IMR-90 (cell line): ENCODE measurements at regions of chr17 and their contacts with region 1.

Region 1: DNA sequence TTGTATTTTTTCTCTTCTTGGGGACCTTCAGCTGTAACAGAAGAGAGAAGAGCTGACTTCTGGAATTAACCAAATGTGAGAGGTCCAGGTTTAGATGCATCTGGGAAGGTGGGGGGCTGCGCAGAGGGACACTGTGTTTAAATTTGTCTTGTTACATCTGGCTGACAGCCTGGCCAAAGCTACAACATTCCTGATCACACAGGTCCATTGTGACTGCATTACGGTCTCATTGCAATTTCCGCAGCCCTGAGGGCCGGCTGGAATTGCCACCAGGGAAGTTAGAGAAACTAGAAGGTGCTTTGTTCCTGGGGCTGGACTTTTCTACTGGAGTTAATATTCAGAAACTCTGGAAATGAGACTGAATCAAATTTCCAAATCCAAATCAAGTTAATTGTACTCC is 37.9 kb upstream of the LRRC75A start:
- DNase-seq: no peak
- ATAC-seq: no peak
- H3K4me3 ChIP-seq: no peak overlapping the region
- H3K27ac ChIP-seq: no peak overlapping the region
- H3K4me1 ChIP-seq: no peaks in the 10 kb centered on the region
- H3K27me3 ChIP-seq: peaks cover 24% of the 10 kb centered on the region
- CTCF ChIP-seq: no peak
- POLR2A ChIP-seq: no peak
- RAD21 ChIP-seq: no peak

Region 2: GRCh38 chr17:16383772-16384287 is 146.1 kb before region 1 on chr17:
- CTCF ChIA-PET with region 1: no interaction called
- POLR2A ChIA-PET with region 1: no interaction called
- dilution Hi-C with region 1: no loop called
- in situ Hi-C with region 1: no loop called
- intact Hi-C with region 1: no loop called
- DNase-seq: no peak
- ATAC-seq: no peak
- H3K4me3 ChIP-seq: no peak overlapping the region
- H3K27ac ChIP-seq: no peak overlapping the region
- H3K4me1 ChIP-seq: peaks cover 4% of the 10 kb centered on the region; the same call in 1 of the 2 replicates
- H3K27me3 ChIP-seq: no peaks in the 10 kb centered on the region
- CTCF ChIP-seq: no peak
- POLR2A ChIP-seq: 0 out of 2 replicates have a peak, but pooled peaks have one; percentile 3
- RAD21 ChIP-seq: no peak

Region 3: GRCh38 chr17:16428098-16428882 is 101.6 kb before region 1 on chr17:
- CTCF ChIA-PET with region 1: no interaction called
- POLR2A ChIA-PET with region 1: no interaction called
- dilution Hi-C with region 1: no loop called
- in situ Hi-C with region 1: no loop called
- intact Hi-C with region 1: no loop called
- DNase-seq: peak; percentile 59
- ATAC-seq: peak; percentile 89
- H3K4me3 ChIP-seq: no peak overlapping the region
- H3K27ac ChIP-seq: peak overlapping the region; percentile 24; the same call in 1 of the 2 replicates
- H3K4me1 ChIP-seq: peaks cover 6% of the 10 kb centered on the region
- H3K27me3 ChIP-seq: no peaks in the 10 kb centered on the region
- CTCF ChIP-seq: peak; percentile 63
- POLR2A ChIP-seq: no peak
- RAD21 ChIP-seq: peak; percentile 55

Region 4: GRCh38 chr17:16568541-16569357 is 38.8 kb after region 1 on chr17 and contains the start of gene ZNF287:
- CTCF ChIA-PET with region 1: no interaction called
- POLR2A ChIA-PET with region 1: no interaction called
- dilution Hi-C with region 1: no loop called
- in situ Hi-C with region 1: no loop called
- intact Hi-C with region 1: no loop called
- DNase-seq: peak; percentile 86
- ATAC-seq: peak; percentile 100
- H3K4me3 ChIP-seq: peak within 1 kb of the TSS; percentile 69
- H3K27ac ChIP-seq: peak within 1 kb of the TSS; percentile 33; the same call in 1 of the 2 replicates
- H3K4me1 ChIP-seq: no peaks in the 10 kb centered on the region
- H3K27me3 ChIP-seq: peaks cover 5% of the 10 kb centered on the region; the same call in 1 of the 2 replicates
- CTCF ChIP-seq: no peak
- POLR2A ChIP-seq: no peak
- RAD21 ChIP-seq: no peak
- total RNA-seq, gene ZNF287: 6.9 and 7.0 TPM in 2 replicates

Region 5: DNA sequence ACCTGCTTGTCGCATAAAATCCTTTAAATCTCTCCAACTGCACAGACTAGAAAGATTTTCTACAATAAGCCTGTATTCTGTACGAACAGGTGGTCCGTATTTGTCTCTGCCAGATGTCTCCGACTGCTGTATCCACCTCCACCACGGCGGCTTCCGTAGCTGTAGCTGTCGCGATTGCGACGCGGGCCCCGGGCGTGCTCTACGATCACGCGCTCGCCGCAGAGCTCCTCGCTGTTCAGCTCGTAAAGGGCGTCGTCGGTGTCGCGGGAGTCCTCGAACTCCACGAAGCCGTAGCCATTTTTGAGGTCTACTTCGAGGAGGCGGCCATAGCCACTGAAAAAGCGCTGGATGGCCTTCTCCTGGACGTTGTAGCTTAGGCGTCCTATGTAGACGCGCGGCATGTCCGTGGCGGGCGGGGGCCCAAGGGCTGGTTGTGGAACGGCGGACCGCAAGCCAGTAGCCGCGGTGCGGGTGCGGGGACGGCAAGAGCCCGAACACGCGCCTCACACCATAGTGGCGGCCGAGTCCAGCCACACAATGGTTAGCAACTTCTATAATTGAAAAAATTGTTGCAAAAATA is 87.7 kb after region 1 on chr17:
- CTCF ChIA-PET with region 1: no interaction called
- POLR2A ChIA-PET with region 1: no interaction called
- dilution Hi-C with region 1: no loop called
- in situ Hi-C with region 1: no loop called
- intact Hi-C with region 1: no loop called
- DNase-seq: no peak
- ATAC-seq: no peak
- H3K4me3 ChIP-seq: no peak overlapping the region
- H3K27ac ChIP-seq: no peak overlapping the region
- H3K4me1 ChIP-seq: no peaks in the 10 kb centered on the region
- H3K27me3 ChIP-seq: no peaks in the 10 kb centered on the region
- CTCF ChIP-seq: no peak
- POLR2A ChIP-seq: no peak
- RAD21 ChIP-seq: no peak

Region 6: DNA sequence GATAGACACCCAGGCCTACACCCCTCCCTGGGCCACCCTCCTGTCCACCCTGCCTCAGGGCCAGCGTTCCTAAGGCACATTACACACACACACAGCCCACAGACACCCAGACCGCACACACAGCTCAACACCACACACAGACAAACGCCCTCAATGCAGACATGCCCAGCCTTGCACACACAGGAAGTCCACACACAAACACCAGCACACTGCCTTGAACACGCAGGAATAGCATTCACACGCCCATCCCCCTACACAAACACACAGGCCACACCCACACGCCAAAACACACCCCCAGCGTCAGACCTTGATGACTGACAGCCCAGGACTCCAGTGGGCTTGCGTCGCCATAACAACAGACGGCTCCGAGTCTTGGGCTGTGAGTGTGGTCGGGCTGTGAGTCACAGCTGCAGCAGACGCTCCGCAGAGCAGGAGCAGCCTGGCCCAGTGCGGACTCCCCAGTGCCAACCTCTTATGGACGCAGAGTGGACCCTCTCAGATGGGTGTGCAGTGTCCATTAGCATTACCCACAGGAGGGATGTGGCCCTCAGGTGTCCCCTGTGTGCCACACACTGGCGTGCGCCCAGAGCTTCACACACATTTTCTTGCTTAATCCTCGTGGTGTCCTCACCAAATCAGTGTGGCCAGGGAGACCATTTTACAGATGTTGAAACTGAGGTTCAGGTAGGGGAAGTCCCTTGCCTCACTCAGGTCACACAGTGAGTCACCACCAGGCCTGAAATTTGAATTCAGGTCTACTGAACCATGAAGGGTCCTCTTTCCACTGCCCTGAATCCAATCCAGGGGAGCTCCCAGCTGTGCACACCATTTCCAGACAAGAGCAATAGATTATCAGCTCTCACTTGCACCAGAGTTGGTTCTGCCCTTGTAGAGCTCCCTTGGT is 1133.5 kb after region 1 on chr17:
- CTCF ChIA-PET with region 1: no interaction called
- POLR2A ChIA-PET with region 1: interaction called, 19 read pairs
- dilution Hi-C with region 1: no loop called
- in situ Hi-C with region 1: no loop called
- intact Hi-C with region 1: no loop called
- DNase-seq: peak; percentile 97
- ATAC-seq: peak; percentile 97
- H3K4me3 ChIP-seq: no peak overlapping the region
- H3K27ac ChIP-seq: no peak overlapping the region
- H3K4me1 ChIP-seq: peaks cover 8% of the 10 kb centered on the region
- H3K27me3 ChIP-seq: no peaks in the 10 kb centered on the region; the same call in 1 of the 2 replicates
- CTCF ChIP-seq: no peak
- POLR2A ChIP-seq: no peak
- RAD21 ChIP-seq: no peak